Transverse colon (tissue), 4 donors: ENCODE measurements at regions of chr10 and their contacts with region 1.

Region 1: DNA sequence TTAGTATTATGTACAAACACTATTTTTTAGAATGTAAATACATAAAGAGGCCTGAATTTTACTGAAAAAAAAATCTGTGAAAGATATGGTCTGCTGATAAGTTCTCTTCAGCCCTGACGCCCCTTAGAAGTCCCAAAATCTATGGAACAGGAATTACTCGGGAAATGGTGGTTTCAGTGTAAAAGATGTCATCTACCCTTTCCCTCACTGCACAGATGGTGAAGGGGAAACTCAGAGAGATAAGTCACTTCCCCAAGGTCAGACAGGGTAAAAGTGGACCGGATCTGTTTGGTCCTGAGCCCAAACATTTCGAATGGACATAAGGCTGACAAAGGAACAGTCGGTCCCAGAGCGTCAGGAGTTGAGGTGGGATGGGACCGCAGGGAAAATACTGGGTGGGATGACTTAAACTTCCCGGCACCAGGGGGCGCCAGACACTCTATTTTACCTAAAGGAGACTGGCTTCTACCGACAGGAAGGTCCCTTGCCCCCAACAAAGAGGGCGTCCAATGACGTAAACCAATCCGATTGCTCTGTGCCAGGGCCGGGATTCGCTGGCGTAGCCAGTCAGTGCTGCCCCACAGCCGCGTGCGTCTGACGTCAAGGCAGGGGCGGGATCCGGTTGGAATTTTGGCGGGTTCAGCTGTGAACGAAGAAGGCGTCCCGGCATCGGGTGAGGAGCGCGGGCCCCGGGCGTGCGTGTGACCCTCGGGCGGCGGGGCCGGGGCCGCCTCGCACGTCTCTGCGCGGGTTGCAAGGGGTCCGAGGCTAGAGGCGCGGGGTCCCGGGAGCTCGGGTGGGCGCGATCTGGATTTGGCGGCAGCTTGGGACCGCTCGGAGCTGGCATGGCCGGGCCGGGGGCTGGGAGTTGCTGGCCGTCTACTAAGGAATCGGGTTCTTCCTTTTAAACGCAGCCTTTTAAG is at the start of gene MCM10:
- DNase-seq: peak; percentile 99
- H3K4me3 ChIP-seq: peak within 1 kb of the TSS; percentile 12 to 58 (median 39)
- H3K27ac ChIP-seq: peak within 1 kb of the TSS in 1 of 4 donors; percentile 21
- H3K4me1 ChIP-seq: peaks cover 0 to 17% (median 11%) of the 10 kb centered on the region in 4 donors
- H3K27me3 ChIP-seq: no peaks in the 10 kb centered on the region
- CTCF ChIP-seq: peak; percentile 83 to 96 (median 88)
- EP300 ChIP-seq: no peak
- POLR2A ChIP-seq: no peak
- total RNA-seq, gene MCM10: 0.41 to 0.75 (median 0.62) TPM

Region 2: DNA sequence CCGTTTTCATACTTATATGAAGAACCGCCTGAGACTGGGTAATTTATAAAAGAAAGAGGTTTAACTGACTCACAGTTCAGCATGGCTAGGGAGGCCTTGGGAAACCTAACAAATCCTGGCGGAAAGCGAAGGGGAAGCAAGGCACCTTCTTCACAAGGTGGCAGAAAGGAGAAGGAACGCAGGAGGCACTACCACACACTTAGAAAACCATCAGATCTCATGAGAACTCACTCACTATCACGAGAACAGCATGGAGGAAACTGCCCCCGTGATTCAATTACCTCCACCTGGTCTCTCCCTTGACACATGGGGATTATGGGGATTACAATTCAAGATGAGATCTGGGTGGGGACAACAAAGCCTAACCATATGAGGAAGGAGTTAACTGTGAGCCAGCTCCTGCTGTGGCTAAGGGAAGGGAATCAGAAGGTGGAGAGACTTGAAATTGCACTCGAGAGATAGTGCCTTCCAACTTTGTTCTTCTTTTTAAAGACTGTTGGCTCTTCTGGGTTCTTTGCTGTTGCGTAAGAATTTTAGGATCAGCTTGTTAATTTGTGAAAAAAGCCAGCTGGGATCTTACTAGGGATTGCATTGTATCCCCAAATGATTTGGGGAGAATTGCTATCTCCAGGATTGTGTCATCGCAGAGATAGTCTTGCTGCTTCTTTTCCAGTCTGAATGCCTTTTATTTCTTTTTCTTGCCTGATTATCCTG is 40.3 kb before region 1 on chr10:
- in situ Hi-C with region 1: no loop called
- intact Hi-C with region 1: no loop called
- DNase-seq: no peak
- H3K4me3 ChIP-seq: no peak overlapping the region
- H3K27ac ChIP-seq: no peak overlapping the region
- H3K4me1 ChIP-seq: peaks cover 0 to 9% (median 5%) of the 10 kb centered on the region in 4 donors
- H3K27me3 ChIP-seq: no peaks in the 10 kb centered on the region
- CTCF ChIP-seq: no peak
- EP300 ChIP-seq: no peak
- POLR2A ChIP-seq: no peak

Region 3: GRCh38 chr10:13206546-13207443 is 45.6 kb after region 1 on chr10:
- in situ Hi-C with region 1: no loop called
- intact Hi-C with region 1: no loop called
- DNase-seq: no peak
- H3K4me3 ChIP-seq: no peak overlapping the region
- H3K27ac ChIP-seq: no peak overlapping the region
- H3K4me1 ChIP-seq: no peaks in the 10 kb centered on the region
- H3K27me3 ChIP-seq: no peaks in the 10 kb centered on the region
- CTCF ChIP-seq: peak; percentile 40 to 52 (median 42)
- EP300 ChIP-seq: no peak
- POLR2A ChIP-seq: no peak

Region 4: DNA sequence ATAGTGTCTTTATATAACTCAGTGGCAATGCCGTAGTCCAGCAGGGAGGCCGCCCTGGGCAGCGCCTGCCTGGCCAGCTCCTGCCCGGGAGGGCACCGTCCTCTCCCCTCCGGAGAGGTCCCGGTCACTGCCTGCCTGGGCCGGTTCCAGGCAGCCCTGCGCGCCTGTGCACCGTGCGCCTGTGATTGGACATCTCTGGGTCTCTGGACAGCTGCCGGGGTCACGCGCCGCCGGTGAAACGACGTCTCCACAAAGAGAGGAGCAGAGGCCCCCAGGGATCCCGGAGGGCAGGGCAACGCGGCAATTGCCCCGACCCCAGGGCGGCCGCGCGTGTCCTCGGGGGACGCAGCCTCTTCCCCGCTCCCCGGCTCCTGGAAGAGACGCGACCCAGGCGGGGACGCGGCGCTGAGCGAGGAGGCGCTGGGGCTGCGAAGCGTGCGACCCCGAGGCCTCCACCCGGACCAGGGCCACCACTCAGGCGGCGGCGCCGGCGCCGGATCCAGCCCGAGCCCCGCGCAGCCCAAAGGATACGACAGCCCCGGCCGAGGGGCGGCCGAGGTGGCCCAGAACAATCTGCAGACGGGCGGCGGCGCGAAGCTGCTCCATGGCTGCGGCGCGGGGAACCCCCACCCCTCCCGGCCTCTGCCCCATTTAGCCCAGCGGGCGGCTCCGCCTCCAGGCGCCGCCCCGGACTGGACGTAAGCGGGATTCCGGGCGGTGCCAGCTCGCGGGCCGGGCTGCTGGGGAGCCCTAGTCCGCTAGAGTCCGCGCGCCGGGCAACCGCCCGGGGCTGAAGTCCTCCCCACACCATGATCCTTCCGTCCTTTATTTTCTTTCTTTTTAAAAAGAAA is 138.5 kb after region 1 on chr10 and contains the start of gene PHYH:
- in situ Hi-C with region 1: loop called in 1 of 4 experiments (anchors 5 kb)
- intact Hi-C with region 1: loop called (anchors 1 kb)
- DNase-seq: peak; percentile 94
- H3K4me3 ChIP-seq: peak within 1 kb of the TSS; percentile 82 to 87 (median 86)
- H3K27ac ChIP-seq: peak within 1 kb of the TSS; percentile 99 to 100 (median 99)
- H3K4me1 ChIP-seq: peaks cover 3 to 27% (median 15%) of the 10 kb centered on the region in 4 donors
- H3K27me3 ChIP-seq: no peaks in the 10 kb centered on the region
- CTCF ChIP-seq: peak in 1 of 5 experiments; percentile 14
- EP300 ChIP-seq: no peak
- POLR2A ChIP-seq: peak; percentile 88
- total RNA-seq, gene PHYH: 16.1 to 90.1 (median 49.2) TPM